Endothelial cell of umbilical vein (primary cell): ENCODE measurements at regions of chr11 and their contacts with region 1.

Region 1: GRCh38 chr11:5808500-5809121 is at the start of gene OR52N2:
- DNase-seq: peak; percentile 72
- H3K4me3 ChIP-seq: peak within 1 kb of the TSS; percentile 7 to 50 (median 22)
- H3K27ac ChIP-seq: no peak within 1 kb of the TSS
- H3K4me1 ChIP-seq: peaks cover 7% of the 10 kb centered on the region
- H3K27me3 ChIP-seq: peaks cover 0 to 3% of the 10 kb centered on the region in 2 experiments
- CTCF ChIP-seq: peak; percentile 76 to 77
- POLR2A ChIP-seq: no peak
- total RNA-seq, gene OR52N2: not detected in 2 replicates

Region 2: DNA sequence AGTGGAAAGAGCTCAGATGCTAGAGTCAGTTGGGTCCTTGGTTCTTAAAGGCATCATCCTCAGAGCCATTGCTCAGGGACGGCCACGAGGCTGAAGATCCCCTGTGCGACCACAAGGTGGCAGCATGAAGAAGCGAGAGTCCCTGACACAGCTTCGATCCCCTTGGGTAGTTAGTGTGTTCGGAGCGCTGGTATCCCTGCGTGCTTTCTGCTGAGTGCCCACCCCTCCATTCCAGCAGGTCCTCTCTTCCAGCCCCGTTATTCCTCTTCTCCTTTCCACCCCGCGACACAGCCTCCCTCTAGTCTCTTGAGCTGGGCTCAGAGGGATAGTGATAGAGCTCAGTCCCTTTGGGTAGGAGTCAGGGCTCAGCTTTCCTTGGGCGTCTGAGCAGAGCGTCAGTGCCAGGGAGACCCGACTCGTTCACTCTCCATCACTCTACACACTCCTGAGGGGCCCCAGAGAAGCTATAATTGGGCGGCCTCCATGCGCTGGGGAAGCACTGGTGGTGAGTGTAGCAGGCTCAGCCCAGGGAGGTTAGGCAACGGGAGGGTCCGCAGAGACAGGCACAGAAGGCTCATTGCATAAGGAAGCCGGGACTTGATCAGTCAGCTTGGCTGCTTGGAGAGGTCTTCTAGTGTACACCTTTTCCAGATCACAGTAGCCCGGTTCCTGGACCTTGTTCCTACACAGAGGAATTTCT is 1171.5 kb before region 1 on chr11 and contains the start of gene OR51D1:
- CTCF ChIA-PET with region 1: interaction called, 14 read pairs
- POLR2A ChIA-PET with region 1: no interaction called
- dilution Hi-C with region 1: no loop called
- intact Hi-C with region 1: loop called (anchors 1 kb)
- DNase-seq: peak; percentile 66
- H3K4me3 ChIP-seq: no peak within 1 kb of the TSS
- H3K27ac ChIP-seq: no peak within 1 kb of the TSS
- H3K4me1 ChIP-seq: no peaks in the 10 kb centered on the region
- H3K27me3 ChIP-seq: peaks cover 0 to 1% of the 10 kb centered on the region in 2 experiments
- CTCF ChIP-seq: peak; percentile 82 to 93
- POLR2A ChIP-seq: no peak
- total RNA-seq, gene OR51D1: not detected in 2 replicates

Region 3: GRCh38 chr11:5204787-5205186 is 603.8 kb before region 1 on chr11:
- CTCF ChIA-PET with region 1: no interaction called
- POLR2A ChIA-PET with region 1: no interaction called
- dilution Hi-C with region 1: no loop called
- intact Hi-C with region 1: loop called (anchors 1 kb)
- DNase-seq: peak; percentile 72
- H3K4me3 ChIP-seq: no peak overlapping the region
- H3K27ac ChIP-seq: no peak overlapping the region
- H3K4me1 ChIP-seq: no peaks in the 10 kb centered on the region
- H3K27me3 ChIP-seq: no peaks in the 10 kb centered on the region
- CTCF ChIP-seq: peak; percentile 32 to 42
- POLR2A ChIP-seq: no peak

Region 4: DNA sequence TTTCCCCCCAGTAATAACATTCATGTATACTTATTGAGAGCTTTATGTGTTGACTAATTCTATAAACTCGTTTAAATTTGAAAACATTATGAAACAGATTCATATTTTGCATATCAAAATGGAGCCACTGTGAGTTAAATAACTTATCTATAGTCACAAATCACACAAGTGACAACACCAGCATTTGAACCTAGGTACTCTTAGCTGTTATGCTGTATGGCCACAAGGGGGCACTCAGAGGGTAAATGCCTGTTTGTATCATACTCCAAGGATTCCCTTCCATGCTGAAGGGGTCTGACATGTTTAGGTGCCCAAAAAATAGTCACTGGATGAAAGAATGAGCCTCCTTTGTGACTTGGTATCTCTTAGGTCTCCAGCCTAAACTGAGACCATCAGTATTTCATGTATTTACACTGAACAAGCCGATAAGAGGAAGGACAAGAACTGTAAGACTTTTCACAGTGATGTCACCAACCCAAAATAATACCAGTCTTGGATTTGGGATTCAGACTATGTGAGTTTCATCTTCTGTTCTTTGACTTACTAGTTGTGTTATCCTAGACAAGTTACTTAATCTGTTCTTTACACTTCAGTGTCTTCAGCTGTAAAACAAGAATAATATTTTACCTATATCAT is 332.3 kb before region 1 on chr11:
- CTCF ChIA-PET with region 1: interaction called, 38 read pairs
- POLR2A ChIA-PET with region 1: no interaction called
- dilution Hi-C with region 1: no loop called
- intact Hi-C with region 1: loop called (anchors 1 kb)
- DNase-seq: peak; percentile 56
- H3K4me3 ChIP-seq: no peak overlapping the region
- H3K27ac ChIP-seq: no peak overlapping the region
- H3K4me1 ChIP-seq: no peaks in the 10 kb centered on the region
- H3K27me3 ChIP-seq: peaks cover 1 to 3% of the 10 kb centered on the region in 2 experiments
- CTCF ChIP-seq: peak; percentile 67 to 71
- POLR2A ChIP-seq: no peak

Region 5: DNA sequence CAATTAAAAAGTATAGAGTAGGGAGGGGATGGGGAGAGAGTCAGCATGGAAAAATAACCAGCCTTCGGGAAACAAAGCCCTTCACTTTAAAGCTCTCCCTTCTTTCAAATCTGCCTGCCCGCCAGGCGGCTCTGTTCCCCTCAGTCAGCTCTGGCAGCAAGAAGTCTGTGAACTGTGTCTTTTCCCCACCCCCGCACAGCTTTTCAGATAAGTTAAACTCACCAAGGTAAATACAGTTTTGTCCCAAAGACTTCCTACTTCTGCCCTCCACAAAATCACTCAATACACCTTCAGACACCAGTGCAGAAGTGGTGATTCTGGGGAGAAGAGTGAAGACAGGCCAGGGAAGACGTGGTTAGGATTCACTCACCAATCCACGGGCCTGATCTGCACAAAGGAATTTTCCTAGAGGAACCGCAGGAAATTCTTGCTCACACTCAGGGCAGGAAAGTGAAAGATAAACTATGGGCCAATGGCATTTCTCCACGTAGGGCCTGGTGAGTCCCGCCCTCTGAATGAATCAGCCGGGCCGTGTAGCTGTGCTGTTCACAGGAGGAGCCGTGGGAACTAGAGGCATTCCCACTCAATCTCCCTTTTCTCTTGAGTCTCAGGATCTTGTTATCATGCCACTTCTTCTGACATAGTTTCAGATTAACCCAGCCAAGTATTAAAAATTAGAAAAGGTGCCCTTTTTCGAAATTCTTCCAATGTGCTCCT is 123.8 kb before region 1 on chr11 and contains the start of gene TRIM5:
- CTCF ChIA-PET with region 1: interaction called, 4 read pairs
- POLR2A ChIA-PET with region 1: no interaction called
- dilution Hi-C with region 1: no loop called
- intact Hi-C with region 1: loop called (anchors 2 kb)
- DNase-seq: peak; percentile 99
- H3K4me3 ChIP-seq: peak within 1 kb of the TSS; percentile 38 to 94 (median 62)
- H3K27ac ChIP-seq: peak within 1 kb of the TSS; percentile 98
- H3K4me1 ChIP-seq: peaks cover 17% of the 10 kb centered on the region
- H3K27me3 ChIP-seq: no peaks in the 10 kb centered on the region
- CTCF ChIP-seq: peak; percentile 57 to 67
- POLR2A ChIP-seq: peak; percentile 97
- total RNA-seq, gene TRIM5: 54.5 and 61.4 TPM in 2 replicates